ENCODE measurements at regions of chr17 and their contacts with region 1.

Region 1: GRCh38 chr17:40177275-40177874 is at the start of gene RAPGEFL1:
- DNase-seq: no peak
- ATAC-seq: peak; percentile 26 to 53; a peak in 3 of 6 replicates
- H3K4me3 ChIP-seq: peak within 1 kb of the TSS; percentile 27; the same call in 2 of the 3 replicates
- H3K27ac ChIP-seq: peak within 1 kb of the TSS in 1 of 2 experiments; percentile 47; a peak in 2 of 6 replicates
- H3K4me1 ChIP-seq: peaks cover 26% of the 10 kb centered on the region
- CTCF ChIP-seq: no peak
- EP300 ChIP-seq: no peak
- POLR2A ChIP-seq: no peak
- RAD21 ChIP-seq: no peak
- polyA plus RNA-seq, gene RAPGEFL1: 3.7 and 4.1 TPM in 2 replicates

Region 2: GRCh38 chr17:40151414-40151963 is 25.9 kb before region 1 on chr17:
- CTCF ChIA-PET with region 1: interaction called, 11 read pairs
- POLR2A ChIA-PET with region 1: interaction called, 6 read pairs
- DNase-seq: no peak
- ATAC-seq: 0 out of 6 replicates have a peak, but pooled peaks of 1 of the 2 experiments have one; percentile 24
- H3K4me3 ChIP-seq: no peak overlapping the region
- H3K27ac ChIP-seq: no peak overlapping the region
- H3K4me1 ChIP-seq: peaks cover 5% of the 10 kb centered on the region; the same call in 1 of the 3 replicates
- CTCF ChIP-seq: no peak
- EP300 ChIP-seq: no peak
- POLR2A ChIP-seq: no peak
- RAD21 ChIP-seq: no peak